Naive thymus-derived CD4-positive, alpha-beta T cell (primary cell): ENCODE measurements at regions of chr16 and their contacts with region 1.

Region 1: DNA sequence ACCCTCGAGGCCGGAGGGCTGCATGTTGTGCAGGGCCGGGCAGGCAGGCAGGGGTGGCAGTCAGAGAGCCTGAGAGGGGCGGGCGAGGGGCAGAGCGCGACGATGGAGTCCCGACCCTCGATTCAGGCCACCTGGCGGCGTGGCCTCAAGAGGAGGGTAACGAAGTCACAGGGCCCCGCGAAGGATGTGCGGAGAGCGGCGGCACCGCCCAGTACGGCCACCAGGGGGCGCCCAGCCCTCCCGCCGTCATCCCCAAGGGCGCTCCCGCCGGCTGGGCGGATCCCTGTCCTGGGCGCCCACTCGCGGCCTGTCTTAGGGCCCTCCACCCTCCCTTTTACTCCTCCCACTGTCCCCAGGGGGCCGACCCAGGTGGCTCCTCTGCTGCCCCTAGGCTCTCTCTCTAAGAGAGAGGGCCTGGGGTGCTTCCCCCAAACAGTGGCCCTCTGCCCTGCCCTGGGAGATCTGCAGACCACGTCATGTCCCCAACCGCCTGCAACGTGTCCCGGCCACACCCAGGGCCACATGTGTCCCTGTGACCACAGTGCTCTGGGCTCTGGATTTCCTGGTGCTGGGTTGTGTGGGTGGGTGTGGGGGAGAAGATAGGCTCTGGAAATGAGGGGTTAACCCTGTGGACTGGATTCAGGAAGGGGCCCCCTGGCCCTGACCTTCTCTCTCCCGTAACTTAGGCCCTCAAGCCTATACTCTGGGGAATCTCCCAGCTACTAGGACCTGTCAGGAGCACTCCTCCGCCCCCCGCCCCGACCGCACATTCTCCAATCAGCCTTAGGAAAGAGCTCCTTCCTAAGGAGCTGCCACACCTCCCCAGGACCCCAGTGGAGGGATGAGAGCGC is 5.9 kb downstream of the DPEP2 start:
- DNase-seq: peak; percentile 74 to 90 (median 83)
- ATAC-seq: peak; percentile 93
- H3K4me3 ChIP-seq: peak overlapping the region; percentile 65
- H3K4me3 Mint-ChIP-seq: peak overlapping the region; percentile 83 to 94 (median 92)
- H3K27ac ChIP-seq: peak overlapping the region; percentile 87
- H3K27ac Mint-ChIP-seq: peak overlapping the region; percentile 93 to 99 (median 97)
- H3K4me1 ChIP-seq: peaks cover 8 to 25% of the 10 kb centered on the region in 2 donors
- H3K4me1 Mint-ChIP-seq: peaks cover 10 to 48% (median 35%) of the 10 kb centered on the region in 7 donors
- H3K27me3 ChIP-seq: no peaks in the 10 kb centered on the region
- H3K27me3 Mint-ChIP-seq: no peaks in the 10 kb centered on the region

Region 2: GRCh38 chr16:67872786-67873537 is 120.5 kb before region 1 on chr16 and contains the start of gene EDC4:
- CTCF ChIA-PET with region 1: no interaction called
- POLR2A ChIA-PET with region 1: no interaction called
- intact Hi-C with region 1: no loop called
- DNase-seq: peak; percentile 75 to 96 (median 83)
- ATAC-seq: peak; percentile 96
- H3K4me3 ChIP-seq: peak within 1 kb of the TSS; percentile 88
- H3K4me3 Mint-ChIP-seq: peak within 1 kb of the TSS; percentile 88 to 96 (median 94)
- H3K27ac ChIP-seq: peak within 1 kb of the TSS; percentile 91
- H3K27ac Mint-ChIP-seq: peak within 1 kb of the TSS; percentile 90 to 97 (median 92)
- H3K4me1 ChIP-seq: peaks cover 19 to 30% of the 10 kb centered on the region in 2 donors
- H3K4me1 Mint-ChIP-seq: peaks cover 25 to 41% (median 36%) of the 10 kb centered on the region in 7 donors
- H3K27me3 ChIP-seq: no peaks in the 10 kb centered on the region
- H3K27me3 Mint-ChIP-seq: no peaks in the 10 kb centered on the region
- total RNA-seq, gene EDC4: 103 to 166 (median 122) TPM

Region 3: DNA sequence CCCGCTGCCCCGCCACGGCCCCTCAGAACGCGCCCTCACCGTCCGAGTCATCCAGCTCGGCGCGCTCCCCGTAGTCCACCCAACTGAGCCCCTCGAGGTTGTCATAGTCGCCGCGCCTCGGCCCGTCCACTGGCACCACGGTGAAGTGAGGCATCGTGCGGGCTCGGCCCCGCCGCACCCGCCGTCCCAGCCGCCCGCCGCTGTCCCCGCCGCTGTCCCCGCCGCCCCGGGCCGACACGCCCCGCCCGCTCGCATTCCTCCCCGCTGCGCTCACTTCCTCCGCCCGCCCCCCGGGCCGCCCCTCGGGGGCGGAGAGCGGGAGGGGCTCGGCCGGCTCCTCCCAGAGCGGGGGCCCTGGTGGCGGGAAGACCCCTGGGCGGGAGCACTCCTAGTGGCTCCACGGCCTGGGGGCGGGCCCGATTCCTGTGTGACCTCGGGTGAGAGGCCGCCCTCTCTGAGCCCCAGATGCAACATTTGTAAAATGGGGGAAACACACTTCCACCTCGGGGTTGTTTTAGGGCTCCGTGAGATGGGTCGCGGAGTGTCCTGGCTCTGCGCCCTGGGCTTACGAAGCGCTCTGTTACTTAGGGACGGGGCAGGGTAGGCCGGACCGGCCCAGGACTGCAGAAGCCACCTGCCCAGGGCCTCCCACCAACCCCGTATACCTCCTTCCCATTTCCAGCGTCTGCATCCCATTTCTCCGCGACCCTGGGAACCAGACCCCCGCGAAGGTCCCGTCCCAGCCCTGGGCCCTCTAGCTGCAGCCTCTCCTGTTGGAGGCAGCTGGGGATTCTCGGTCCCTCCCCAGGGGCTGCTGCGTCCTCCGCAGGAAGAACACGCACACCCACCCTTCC is 24.8 kb before region 1 on chr16 and contains the start of gene SLC12A4:
- CTCF ChIA-PET with region 1: no interaction called
- POLR2A ChIA-PET with region 1: interaction called, 8 read pairs
- intact Hi-C with region 1: loop called in 1 of 2 experiments (anchors 2 kb)
- DNase-seq: peak; percentile 74 to 96 (median 81)
- ATAC-seq: peak; percentile 97
- H3K4me3 ChIP-seq: peak within 1 kb of the TSS; percentile 88
- H3K4me3 Mint-ChIP-seq: peak within 1 kb of the TSS; percentile 86 to 100 (median 97)
- H3K27ac ChIP-seq: peak within 1 kb of the TSS; percentile 81
- H3K27ac Mint-ChIP-seq: peak within 1 kb of the TSS; percentile 89 to 95 (median 93)
- H3K4me1 ChIP-seq: peaks cover 10 to 14% of the 10 kb centered on the region in 2 donors
- H3K4me1 Mint-ChIP-seq: peaks cover 20 to 42% (median 29%) of the 10 kb centered on the region in 7 donors
- H3K27me3 ChIP-seq: no peaks in the 10 kb centered on the region
- H3K27me3 Mint-ChIP-seq: no peaks in the 10 kb centered on the region
- total RNA-seq, gene SLC12A4: 22.8 to 44.4 (median 31.3) TPM

Region 4: GRCh38 chr16:68005786-68006286 is 12.4 kb after region 1 on chr16:
- CTCF ChIA-PET with region 1: interaction called, 13 read pairs
- POLR2A ChIA-PET with region 1: interaction called, 27 read pairs
- intact Hi-C with region 1: loop called in 1 of 2 experiments (anchors 2 kb)
- DNase-seq: peak in 7 of 9 donors; percentile 37 to 87 (median 77)
- ATAC-seq: peak; percentile 99
- H3K4me3 ChIP-seq: peak overlapping the region; percentile 23
- H3K4me3 Mint-ChIP-seq: peak overlapping the region; percentile 40 to 85 (median 60)
- H3K27ac ChIP-seq: peak overlapping the region; percentile 50
- H3K27ac Mint-ChIP-seq: peak overlapping the region; percentile 91 to 100 (median 97)
- H3K4me1 ChIP-seq: peaks cover 28 to 45% of the 10 kb centered on the region in 2 donors
- H3K4me1 Mint-ChIP-seq: peaks cover 18 to 68% (median 44%) of the 10 kb centered on the region in 7 donors
- H3K27me3 ChIP-seq: no peaks in the 10 kb centered on the region
- H3K27me3 Mint-ChIP-seq: peaks cover 0 to 2% (median 0%) of the 10 kb centered on the region in 5 donors

Region 5: GRCh38 chr16:68040507-68041288 is 47.3 kb after region 1 on chr16:
- CTCF ChIA-PET with region 1: interaction called, 24 read pairs
- POLR2A ChIA-PET with region 1: interaction called, 16 read pairs
- intact Hi-C with region 1: loop called (anchors 1 kb)
- DNase-seq: peak; percentile 81 to 95 (median 87)
- ATAC-seq: peak; percentile 100
- H3K4me3 ChIP-seq: no peak overlapping the region
- H3K4me3 Mint-ChIP-seq: peak overlapping the region in 1 of 10 donors; percentile 9
- H3K27ac ChIP-seq: peak overlapping the region; percentile 26
- H3K27ac Mint-ChIP-seq: peak overlapping the region; percentile 28 to 87 (median 61)
- H3K4me1 ChIP-seq: peaks cover 4 to 5% of the 10 kb centered on the region in 2 donors
- H3K4me1 Mint-ChIP-seq: peaks cover 5 to 26% (median 18%) of the 10 kb centered on the region in 7 donors
- H3K27me3 ChIP-seq: no peaks in the 10 kb centered on the region
- H3K27me3 Mint-ChIP-seq: no peaks in the 10 kb centered on the region

Region 6: DNA sequence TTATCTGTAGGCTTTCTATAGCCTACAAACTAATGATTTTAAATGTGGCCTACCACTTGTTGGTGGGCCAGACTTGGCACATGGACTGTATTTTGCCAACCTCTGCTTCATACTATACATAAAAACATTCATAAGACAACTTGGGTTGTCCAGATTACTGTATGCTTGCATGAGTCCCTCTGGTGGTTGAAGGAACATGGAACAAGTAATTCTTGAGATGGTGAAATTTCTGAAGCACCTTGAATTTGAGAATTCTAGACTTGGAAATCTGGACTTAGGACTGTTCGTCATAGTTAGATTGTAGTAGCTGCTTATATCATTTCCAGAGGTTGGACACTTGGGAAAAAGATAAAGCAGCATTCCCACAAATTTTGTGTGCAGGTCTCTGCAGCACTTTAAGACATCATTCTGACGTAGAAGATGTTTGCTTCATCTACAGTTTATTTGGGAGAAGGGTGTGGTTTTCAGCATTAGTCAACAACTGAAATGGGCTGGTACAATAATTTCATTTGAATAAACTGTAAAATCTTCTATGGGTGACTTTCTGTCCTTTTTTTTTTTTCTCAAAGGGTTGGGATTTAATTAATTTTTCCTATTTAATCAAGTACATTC is 122.9 kb after region 1 on chr16:
- CTCF ChIA-PET with region 1: no interaction called
- POLR2A ChIA-PET with region 1: no interaction called
- intact Hi-C with region 1: no loop called
- DNase-seq: peak in 7 of 9 donors; percentile 11 to 38 (median 19)
- ATAC-seq: peak; percentile 73
- H3K4me3 ChIP-seq: no peak overlapping the region
- H3K4me3 Mint-ChIP-seq: peak overlapping the region in 7 of 10 donors; percentile 3 to 60 (median 52)
- H3K27ac ChIP-seq: peak overlapping the region; percentile 11
- H3K27ac Mint-ChIP-seq: peak overlapping the region in 6 of 9 donors; percentile 28 to 77 (median 57)
- H3K4me1 ChIP-seq: peaks cover 36 to 50% of the 10 kb centered on the region in 2 donors
- H3K4me1 Mint-ChIP-seq: peaks cover 48 to 97% (median 82%) of the 10 kb centered on the region in 7 donors
- H3K27me3 ChIP-seq: no peaks in the 10 kb centered on the region
- H3K27me3 Mint-ChIP-seq: no peaks in the 10 kb centered on the region

Region 7: GRCh38 chr16:68229431-68230198 is 236.2 kb after region 1 on chr16:
- CTCF ChIA-PET with region 1: no interaction called
- POLR2A ChIA-PET with region 1: interaction called, 3 read pairs
- intact Hi-C with region 1: loop called (anchors 1 to 2 kb)
- DNase-seq: peak in 6 of 9 donors; percentile 44 to 64 (median 58)
- ATAC-seq: peak; percentile 61
- H3K4me3 ChIP-seq: no peak overlapping the region
- H3K4me3 Mint-ChIP-seq: peak overlapping the region in 1 of 10 donors; percentile 29
- H3K27ac ChIP-seq: no peak overlapping the region
- H3K27ac Mint-ChIP-seq: peak overlapping the region; percentile 63 to 90 (median 77)
- H3K4me1 ChIP-seq: peaks cover 0 to 21% of the 10 kb centered on the region in 2 donors
- H3K4me1 Mint-ChIP-seq: peaks cover 18 to 53% (median 47%) of the 10 kb centered on the region in 7 donors
- H3K27me3 ChIP-seq: no peaks in the 10 kb centered on the region
- H3K27me3 Mint-ChIP-seq: no peaks in the 10 kb centered on the region

Region 8: DNA sequence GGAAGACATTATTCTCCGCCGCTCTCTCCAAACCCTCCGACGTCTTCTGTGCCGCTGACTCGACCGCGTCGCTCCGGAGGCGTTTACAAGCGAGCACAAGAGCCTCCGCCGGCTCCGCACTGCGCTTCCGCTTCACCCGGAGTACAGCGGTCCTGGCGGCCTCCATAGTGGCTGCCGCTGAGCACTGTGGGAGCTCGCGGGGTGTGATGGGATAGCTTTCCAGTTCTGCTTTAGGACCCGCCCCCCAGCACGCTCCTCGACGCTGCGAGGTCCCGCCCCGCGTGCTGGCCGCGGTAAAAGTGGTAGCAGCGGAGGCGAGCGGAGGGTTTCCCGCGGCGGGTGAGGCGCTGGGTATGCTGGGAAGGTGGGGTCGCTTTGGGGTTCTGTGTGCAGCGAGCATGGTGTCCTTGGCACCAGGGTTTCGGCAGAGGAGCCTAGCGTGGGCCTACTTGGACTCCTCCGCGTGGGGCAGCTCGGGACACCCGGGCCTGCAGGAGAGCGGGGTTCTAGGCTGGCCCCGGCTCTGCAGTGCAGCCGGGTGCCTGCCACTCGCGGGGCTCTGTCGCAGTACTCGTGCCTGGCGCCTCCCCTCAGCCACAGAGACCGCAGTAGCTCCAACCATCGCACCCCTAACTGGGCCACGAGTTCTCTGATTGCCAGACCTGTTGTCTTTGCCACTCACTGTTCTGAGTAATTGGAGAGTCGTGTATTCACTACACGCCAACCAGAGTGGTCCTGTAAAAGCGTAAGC is 317.5 kb after region 1 on chr16 and contains the starts of genes PRMT7 and SLC7A6OS:
- CTCF ChIA-PET with region 1: no interaction called
- POLR2A ChIA-PET with region 1: no interaction called
- intact Hi-C with region 1: no loop called
- DNase-seq: peak; percentile 77 to 94 (median 92)
- ATAC-seq: peak; percentile 99
- H3K4me3 ChIP-seq: peak within 1 kb of the TSS; percentile 99
- H3K4me3 Mint-ChIP-seq: peak within 1 kb of the TSS; percentile 88 to 100 (median 98)
- H3K27ac ChIP-seq: peak within 1 kb of the TSS; percentile 91
- H3K27ac Mint-ChIP-seq: peak within 1 kb of the TSS; percentile 77 to 99 (median 96)
- H3K4me1 ChIP-seq: peaks cover 25 to 32% of the 10 kb centered on the region in 2 donors
- H3K4me1 Mint-ChIP-seq: peaks cover 33 to 69% (median 59%) of the 10 kb centered on the region in 7 donors
- H3K27me3 ChIP-seq: no peaks in the 10 kb centered on the region
- H3K27me3 Mint-ChIP-seq: no peaks in the 10 kb centered on the region
- total RNA-seq, gene PRMT7: 60.8 to 95.1 (median 89.4) TPM
- total RNA-seq, gene SLC7A6OS: 31.4 to 50.3 (median 34.8) TPM